AG04449 (cell line): ENCODE measurements at regions of chr2 and their contacts with region 1.

Region 1: GRCh38 chr2:126776692-126777619 is 121.0 kb downstream of the GYPC start:
- DNase-seq: no peak
- H3K4me3 ChIP-seq: peak overlapping the region; percentile 55
- CTCF ChIP-seq: peak; percentile 97

Region 2: DNA sequence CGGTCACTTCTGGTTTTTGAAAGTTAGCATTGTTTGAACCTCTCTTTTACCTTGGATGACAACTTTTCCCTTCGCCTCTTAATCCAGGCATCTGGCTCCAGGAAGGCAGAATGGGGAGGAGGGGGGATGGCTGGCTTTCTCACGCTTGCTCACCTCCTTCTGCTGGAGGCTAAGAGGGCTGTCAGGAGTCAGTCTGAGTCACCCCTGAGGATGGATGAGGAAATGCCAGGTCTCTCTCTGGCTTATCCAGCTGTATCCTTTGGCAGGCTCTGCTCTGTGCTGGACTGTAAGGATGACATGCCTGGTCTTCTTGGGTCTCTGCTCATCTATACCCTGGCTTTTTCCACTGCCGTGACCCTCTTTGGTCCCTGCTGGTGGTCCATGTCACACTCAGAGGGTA is 263.9 kb before region 1 on chr2:
- CTCF ChIA-PET with region 1: no interaction called
- POLR2A ChIA-PET with region 1: no interaction called
- DNase-seq: no peak
- H3K4me3 ChIP-seq: no peak overlapping the region
- CTCF ChIP-seq: no peak

Region 3: DNA sequence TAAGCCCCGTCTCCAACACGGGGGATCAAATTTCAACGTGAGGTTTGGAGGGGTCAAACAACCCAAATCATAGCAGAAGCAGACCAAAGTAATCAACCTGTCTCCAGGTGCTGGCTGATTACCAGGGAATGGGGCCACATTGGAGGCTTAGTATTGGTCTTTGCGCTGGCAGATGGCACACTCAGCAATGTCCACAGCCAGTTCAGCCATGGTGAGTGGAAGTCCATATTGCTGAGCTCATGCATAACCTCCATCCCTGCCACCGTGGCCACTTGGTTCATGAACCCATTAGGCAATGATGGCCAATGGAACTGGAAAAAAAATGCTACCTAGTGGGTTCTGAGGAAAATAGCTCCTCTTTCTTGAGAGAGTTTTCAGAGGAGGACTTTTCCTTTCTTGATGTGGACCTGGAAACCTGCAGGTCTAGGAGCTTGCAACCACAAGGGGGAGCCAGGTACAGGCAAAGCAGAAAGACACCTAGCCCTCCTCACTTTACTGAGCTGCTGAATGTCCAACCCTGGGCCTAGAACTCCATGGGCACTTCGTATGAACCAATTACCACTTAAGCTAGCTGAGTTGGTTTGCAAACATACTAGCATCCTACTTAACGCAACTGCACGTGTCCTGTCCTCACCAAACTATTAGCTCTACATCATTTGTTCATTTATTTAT is 249.0 kb before region 1 on chr2:
- CTCF ChIA-PET with region 1: interaction called, 106 read pairs
- POLR2A ChIA-PET with region 1: interaction called, 3 read pairs
- DNase-seq: peak; percentile 3
- H3K4me3 ChIP-seq: no peak overlapping the region
- CTCF ChIP-seq: peak; percentile 62

Region 4: GRCh38 chr2:126761981-126762878 is 14.7 kb before region 1 on chr2:
- CTCF ChIA-PET with region 1: no interaction called
- POLR2A ChIA-PET with region 1: no interaction called
- DNase-seq: no peak
- H3K4me3 ChIP-seq: no peak overlapping the region
- CTCF ChIP-seq: no peak